ENCODE measurements at regions of chr19 and their contacts with region 1.

Region 1: GRCh38 chr19:58558623-58559274 is 338 bp upstream of the UBE2M start:
- DNase-seq: peak; percentile 100
- H3K4me3 ChIP-seq: peak overlapping the region; percentile 100
- H3K4me3 Mint-ChIP-seq: peak overlapping the region; percentile 93 to 100 (median 97)
- H3K27ac ChIP-seq: peak overlapping the region; percentile 99
- H3K27ac Mint-ChIP-seq: peak overlapping the region; percentile 96 to 100 (median 98)
- H3K4me1 ChIP-seq: peaks cover 62% of the 10 kb centered on the region
- H3K4me1 Mint-ChIP-seq: peaks cover 65 to 87% (median 68%) of the 10 kb centered on the region in 3 donors
- H3K27me3 ChIP-seq: no peaks in the 10 kb centered on the region
- H3K27me3 Mint-ChIP-seq: no peaks in the 10 kb centered on the region

Region 2: DNA sequence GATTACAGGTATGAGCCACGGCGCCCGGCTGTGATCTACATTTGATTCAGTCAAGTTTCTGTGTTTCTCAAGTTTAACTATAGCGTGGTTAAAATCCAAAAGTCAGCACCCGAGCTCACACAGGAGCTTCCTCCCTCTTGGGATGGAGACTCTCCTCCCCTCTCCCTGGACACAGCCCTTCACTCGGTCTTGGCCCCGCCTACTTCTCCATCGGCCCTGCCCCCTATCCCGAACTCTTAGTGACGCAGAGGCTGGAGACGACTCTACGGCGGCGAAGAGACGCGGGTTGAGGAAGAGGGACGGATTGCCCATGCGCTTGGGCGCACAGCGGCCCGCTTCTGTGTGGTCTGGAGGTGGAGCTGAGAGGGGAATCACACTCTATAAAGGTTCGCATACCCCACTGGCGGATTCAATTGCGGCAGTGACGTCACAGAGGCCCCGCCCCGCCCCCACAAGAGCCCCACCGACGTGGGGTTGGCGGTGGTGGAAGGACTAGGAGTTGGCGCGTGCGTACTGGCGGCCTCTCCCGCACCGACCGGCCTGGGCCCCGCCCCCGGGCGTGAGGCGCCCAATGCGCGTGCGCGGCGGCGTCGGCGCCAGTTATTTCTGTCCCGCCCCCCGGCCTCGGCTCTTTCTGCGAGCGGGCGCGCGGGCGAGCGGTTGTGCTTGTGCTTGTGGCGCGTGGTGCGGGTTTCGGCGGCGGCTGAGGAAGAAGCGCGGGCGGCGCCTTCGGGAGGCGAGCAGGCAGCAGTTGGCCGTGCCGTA is 14.7 kb before region 1 on chr19 and contains the start of gene TRIM28:
- CTCF ChIA-PET with region 1: interaction called, 4 read pairs
- POLR2A ChIA-PET with region 1: interaction called, 26 read pairs
- DNase-seq: peak; percentile 100
- H3K4me3 ChIP-seq: peak within 1 kb of the TSS; percentile 71
- H3K4me3 Mint-ChIP-seq: peak within 1 kb of the TSS; percentile 89 to 96 (median 94)
- H3K27ac ChIP-seq: peak within 1 kb of the TSS; percentile 84
- H3K27ac Mint-ChIP-seq: peak within 1 kb of the TSS; percentile 98 to 100 (median 99)
- H3K4me1 ChIP-seq: peaks cover 24% of the 10 kb centered on the region
- H3K4me1 Mint-ChIP-seq: peaks cover 31 to 42% (median 36%) of the 10 kb centered on the region in 3 donors
- H3K27me3 ChIP-seq: no peaks in the 10 kb centered on the region
- H3K27me3 Mint-ChIP-seq: peaks cover 14 to 17% of the 10 kb centered on the region in 2 donors
- total RNA-seq, gene TRIM28: 705 to 715 TPM

Region 3: GRCh38 chr19:58572818-58573657 is 14.3 kb after region 1 on chr19 and contains the start of gene MZF1:
- CTCF ChIA-PET with region 1: interaction called, 4 read pairs
- POLR2A ChIA-PET with region 1: interaction called, 21 read pairs
- DNase-seq: peak; percentile 99 to 100 (median 100)
- H3K4me3 ChIP-seq: peak within 1 kb of the TSS; percentile 98
- H3K4me3 Mint-ChIP-seq: peak within 1 kb of the TSS; percentile 89 to 99 (median 95)
- H3K27ac ChIP-seq: peak within 1 kb of the TSS; percentile 100
- H3K27ac Mint-ChIP-seq: peak within 1 kb of the TSS; percentile 95 to 100 (median 100)
- H3K4me1 ChIP-seq: peaks cover 29% of the 10 kb centered on the region
- H3K4me1 Mint-ChIP-seq: peaks cover 24 to 49% (median 26%) of the 10 kb centered on the region in 3 donors
- H3K27me3 ChIP-seq: no peaks in the 10 kb centered on the region
- H3K27me3 Mint-ChIP-seq: peaks cover 0 to 9% of the 10 kb centered on the region in 2 donors
- total RNA-seq, gene MZF1: 14.0 to 14.8 TPM